Vagina (tissue), 2 donors: ENCODE measurements at regions of chr13 and their contacts with region 1.

Region 1: GRCh38 chr13:84946192-84946591 is 853.0 kb downstream of the SLITRK6 start:
- DNase-seq: no peak
- H3K4me3 ChIP-seq: no peak overlapping the region
- H3K27ac ChIP-seq: no peak overlapping the region
- H3K4me1 ChIP-seq: no peaks in the 10 kb centered on the region
- H3K27me3 ChIP-seq: no peaks in the 10 kb centered on the region
- CTCF ChIP-seq: no peak
- POLR2A ChIP-seq: no peak

Region 2: GRCh38 chr13:83085186-83085900 is 1860.8 kb before region 1 on chr13:
- intact Hi-C with region 1: loop called (anchors 10 kb)
- DNase-seq: no peak
- H3K4me3 ChIP-seq: no peak overlapping the region
- H3K27ac ChIP-seq: no peak overlapping the region
- H3K4me1 ChIP-seq: no peaks in the 10 kb centered on the region
- H3K27me3 ChIP-seq: no peaks in the 10 kb centered on the region
- CTCF ChIP-seq: no peak
- POLR2A ChIP-seq: no peak